ENCODE measurements at regions of chr11 and their contacts with region 1.

Region 1: GRCh38 chr11:62186195-62186594 is 3.8 kb upstream of the SCGB1D1 start:
- DNase-seq: no peak
- ATAC-seq: no peak
- H3K4me3 ChIP-seq: no peak overlapping the region
- H3K27ac ChIP-seq: no peak overlapping the region
- H3K4me1 ChIP-seq: no peaks in the 10 kb centered on the region
- H3K27me3 ChIP-seq: peaks cover 12% of the 10 kb centered on the region; the same call in 1 of the 2 replicates
- CTCF ChIP-seq: no peak

Region 2: DNA sequence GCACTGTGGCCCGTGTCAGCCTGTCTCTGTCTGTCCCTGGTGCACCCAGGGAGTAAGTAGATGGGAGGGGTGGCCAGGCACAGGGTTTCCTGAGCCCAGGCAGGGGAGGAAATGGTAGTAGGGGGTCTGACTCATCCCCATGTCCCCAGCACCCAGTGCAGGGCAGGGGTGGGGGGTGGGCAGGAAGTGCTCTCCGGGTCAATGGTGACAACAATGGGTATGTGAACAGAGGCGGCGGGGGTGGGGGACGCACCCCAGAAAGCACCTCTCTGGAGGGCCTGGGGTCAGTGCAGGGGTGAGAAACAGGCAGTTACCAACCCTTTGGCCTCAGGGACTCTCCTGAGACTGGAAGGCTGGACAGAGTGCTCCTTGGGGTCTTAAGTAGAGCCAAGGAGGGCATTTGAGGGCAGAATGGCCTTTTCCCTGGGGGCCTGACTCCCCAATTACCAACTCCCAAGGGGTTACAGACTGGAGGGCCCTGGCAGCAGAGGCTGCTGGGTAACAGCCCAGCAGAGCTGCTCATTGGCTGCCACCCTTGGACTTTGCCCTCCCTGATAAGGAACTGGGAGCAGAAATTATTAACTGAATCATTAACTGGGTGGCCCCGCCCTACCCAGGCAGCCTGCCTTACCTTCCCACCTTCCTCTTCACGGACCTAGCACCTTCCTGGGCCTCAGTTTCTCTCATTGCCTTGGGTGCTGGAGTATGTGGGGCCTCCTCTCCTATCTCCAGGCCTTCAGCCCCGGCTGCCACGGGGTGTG is 429.6 kb before region 1 on chr11:
- CTCF ChIA-PET with region 1: no interaction called
- POLR2A ChIA-PET with region 1: no interaction called
- in situ Hi-C with region 1: no loop called
- intact Hi-C with region 1: no loop called
- DNase-seq: no peak
- ATAC-seq: no peak
- H3K4me3 ChIP-seq: no peak overlapping the region
- H3K27ac ChIP-seq: no peak overlapping the region
- H3K4me1 ChIP-seq: peaks cover 5% of the 10 kb centered on the region
- H3K27me3 ChIP-seq: no peaks in the 10 kb centered on the region
- CTCF ChIP-seq: no peak

Region 3: DNA sequence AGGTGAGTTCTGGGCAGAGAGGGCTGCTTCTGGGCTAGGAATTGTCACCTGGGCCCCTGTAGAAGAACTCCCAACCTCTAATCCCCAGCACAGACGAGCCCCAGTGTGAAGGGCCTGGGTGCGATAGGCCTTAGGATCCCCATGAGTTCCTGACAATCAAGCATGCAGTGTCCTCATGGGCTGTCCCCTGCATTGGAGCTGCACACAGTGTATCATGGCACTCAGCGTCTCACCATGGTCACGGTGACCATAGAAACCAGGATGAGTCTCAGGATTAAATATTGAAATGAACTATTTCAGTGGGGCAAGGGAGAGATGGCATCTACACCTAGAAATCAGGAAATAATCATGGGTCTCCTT is 22.6 kb after region 1 on chr11:
- CTCF ChIA-PET with region 1: interaction called, 10 read pairs
- POLR2A ChIA-PET with region 1: no interaction called
- in situ Hi-C with region 1: no loop called
- intact Hi-C with region 1: no loop called
- DNase-seq: no peak
- ATAC-seq: no peak
- H3K4me3 ChIP-seq: no peak overlapping the region
- H3K27ac ChIP-seq: no peak overlapping the region
- H3K4me1 ChIP-seq: no peaks in the 10 kb centered on the region
- H3K27me3 ChIP-seq: no peaks in the 10 kb centered on the region; the same call in 1 of the 2 replicates
- CTCF ChIP-seq: no peak

Region 4: DNA sequence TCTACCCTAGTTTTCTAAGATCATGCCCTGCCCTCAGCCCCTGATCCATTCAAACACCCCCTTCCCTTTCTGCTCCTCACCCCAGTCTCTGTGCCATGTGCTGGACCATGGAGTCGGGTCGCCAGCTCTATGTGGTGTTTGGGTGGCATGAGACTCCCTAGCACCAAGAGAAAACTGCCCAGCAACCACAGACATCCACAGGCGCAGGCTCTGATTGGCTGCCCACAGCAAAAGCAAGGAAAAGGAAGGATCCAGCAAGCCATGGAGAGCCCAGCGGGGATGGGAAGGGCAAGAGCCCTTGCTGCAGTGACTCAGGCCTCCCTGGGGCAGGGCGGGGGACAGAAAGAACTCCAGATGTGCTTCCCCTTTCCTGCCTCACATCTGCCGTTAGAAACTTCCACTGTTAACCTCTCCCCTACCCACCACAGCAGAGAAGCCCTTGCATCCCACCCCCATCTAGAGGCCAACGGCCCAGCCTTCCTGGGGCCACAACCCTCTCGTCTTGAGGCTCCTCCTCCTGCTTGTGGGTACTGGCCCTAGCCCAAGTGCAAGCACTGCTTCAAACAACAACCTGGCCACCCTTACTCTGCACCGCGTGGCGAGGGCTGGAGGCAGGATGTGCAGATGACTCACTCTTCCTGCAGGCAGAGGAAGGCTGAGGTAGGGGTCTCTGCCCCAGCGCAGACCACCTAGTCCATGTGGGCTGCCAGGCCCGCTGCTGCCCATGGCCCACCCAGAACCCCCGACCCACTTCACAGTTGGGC is 370.1 kb after region 1 on chr11:
- CTCF ChIA-PET with region 1: no interaction called
- POLR2A ChIA-PET with region 1: no interaction called
- in situ Hi-C with region 1: no loop called
- intact Hi-C with region 1: no loop called
- DNase-seq: peak; percentile 87
- ATAC-seq: peak; percentile 74
- H3K4me3 ChIP-seq: peak overlapping the region in 1 of 2 experiments; percentile 15; a peak in 1 of 4 replicates
- H3K27ac ChIP-seq: peak overlapping the region; percentile 94
- H3K4me1 ChIP-seq: peaks cover 95% of the 10 kb centered on the region
- H3K27me3 ChIP-seq: no peaks in the 10 kb centered on the region
- CTCF ChIP-seq: no peak